Ascending aorta (tissue), 2 donors: ENCODE measurements at regions of chr11 and their contacts with region 1.

Region 1: GRCh38 chr11:35525501-35526175 is at the start of gene PAMR1:
- DNase-seq: no peak
- H3K4me3 ChIP-seq: peak within 1 kb of the TSS; percentile 43 to 50
- H3K27ac ChIP-seq: no peak within 1 kb of the TSS
- H3K4me1 ChIP-seq: peaks cover 4 to 17% of the 10 kb centered on the region in 2 donors
- H3K27me3 ChIP-seq: no peaks in the 10 kb centered on the region
- CTCF ChIP-seq: no peak
- total RNA-seq, gene PAMR1: 4.6 TPM

Region 2: DNA sequence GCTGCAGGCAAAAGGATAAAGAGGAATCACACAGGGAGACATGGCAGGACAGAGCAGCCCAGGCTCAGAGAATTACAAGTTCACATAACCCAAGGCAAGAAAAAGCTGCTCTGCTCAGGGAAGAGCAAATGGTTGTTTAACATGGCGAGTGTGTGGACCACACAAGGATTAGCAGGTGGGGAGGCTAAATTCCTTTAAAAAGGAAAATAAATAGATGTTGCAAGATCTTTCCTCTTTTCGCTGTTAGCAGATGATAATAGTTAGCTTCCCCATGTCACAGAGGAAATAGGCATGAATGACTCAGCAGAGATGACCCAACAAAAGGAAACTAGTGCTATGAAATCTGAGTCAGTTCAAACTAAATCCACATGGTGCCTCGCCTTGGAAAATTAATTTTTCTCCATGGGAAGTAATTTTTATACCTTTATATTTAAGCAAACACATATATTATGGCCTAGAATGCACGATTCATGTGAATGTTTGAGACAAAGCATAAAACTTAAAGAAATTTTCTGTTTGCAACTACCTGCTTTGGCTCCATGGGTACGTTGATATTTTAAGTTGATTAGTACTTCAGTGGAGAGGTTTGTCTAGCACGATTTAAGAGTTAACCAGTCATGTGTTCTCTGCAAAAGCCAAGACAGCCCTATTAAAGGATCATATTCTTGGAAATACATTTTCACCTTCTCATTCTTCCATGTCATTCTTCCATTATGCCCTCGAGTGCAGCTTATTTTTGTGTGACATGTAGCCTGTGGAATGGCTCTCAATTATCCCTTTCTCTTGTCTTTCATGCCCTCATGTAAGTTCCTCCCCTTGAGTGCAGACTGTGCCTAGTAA is 54.1 kb after region 1 on chr11:
- intact Hi-C with region 1: loop called (anchors 5 kb)
- DNase-seq: no peak
- H3K4me3 ChIP-seq: no peak overlapping the region
- H3K27ac ChIP-seq: no peak overlapping the region
- H3K4me1 ChIP-seq: no peaks in the 10 kb centered on the region
- H3K27me3 ChIP-seq: no peaks in the 10 kb centered on the region
- CTCF ChIP-seq: no peak